ENCODE measurements at regions of chr19 and their contacts with region 1.

Region 1: GRCh38 chr19:36605877-36606478 is 865 bp downstream of the ZNF382 start:
- DNase-seq: no peak
- ATAC-seq: no peak
- H3K4me3 ChIP-seq: peak overlapping the region in 1 of 2 experiments; percentile 34; a peak in 1 of 4 replicates
- H3K27ac ChIP-seq: no peak overlapping the region
- H3K4me1 ChIP-seq: no peaks in the 10 kb centered on the region
- H3K27me3 ChIP-seq: no peaks in the 10 kb centered on the region
- CTCF ChIP-seq: no peak

Region 2: GRCh38 chr19:37899966-37900365 is 1294.0 kb after region 1 on chr19:
- CTCF ChIA-PET with region 1: interaction called, 13 read pairs
- POLR2A ChIA-PET with region 1: no interaction called
- in situ Hi-C with region 1: no loop called
- intact Hi-C with region 1: no loop called
- DNase-seq: no peak
- ATAC-seq: no peak
- H3K4me3 ChIP-seq: no peak overlapping the region
- H3K27ac ChIP-seq: no peak overlapping the region
- H3K4me1 ChIP-seq: no peaks in the 10 kb centered on the region
- H3K27me3 ChIP-seq: no peaks in the 10 kb centered on the region
- CTCF ChIP-seq: no peak

Measured in Panc1 (cell line).